ENCODE measurements at regions of chr5 and their contacts with region 1.

Region 1: GRCh38 chr5:97162045-97162444 is 19.6 kb upstream of the LIX1 start:
- DNase-seq: peak; percentile 53 to 60
- H3K4me3 ChIP-seq: no peak overlapping the region
- H3K27ac ChIP-seq: no peak overlapping the region
- H3K4me1 ChIP-seq: no peaks in the 10 kb centered on the region
- H3K27me3 ChIP-seq: no peaks in the 10 kb centered on the region
- CTCF ChIP-seq: peak; percentile 89

Region 2: DNA sequence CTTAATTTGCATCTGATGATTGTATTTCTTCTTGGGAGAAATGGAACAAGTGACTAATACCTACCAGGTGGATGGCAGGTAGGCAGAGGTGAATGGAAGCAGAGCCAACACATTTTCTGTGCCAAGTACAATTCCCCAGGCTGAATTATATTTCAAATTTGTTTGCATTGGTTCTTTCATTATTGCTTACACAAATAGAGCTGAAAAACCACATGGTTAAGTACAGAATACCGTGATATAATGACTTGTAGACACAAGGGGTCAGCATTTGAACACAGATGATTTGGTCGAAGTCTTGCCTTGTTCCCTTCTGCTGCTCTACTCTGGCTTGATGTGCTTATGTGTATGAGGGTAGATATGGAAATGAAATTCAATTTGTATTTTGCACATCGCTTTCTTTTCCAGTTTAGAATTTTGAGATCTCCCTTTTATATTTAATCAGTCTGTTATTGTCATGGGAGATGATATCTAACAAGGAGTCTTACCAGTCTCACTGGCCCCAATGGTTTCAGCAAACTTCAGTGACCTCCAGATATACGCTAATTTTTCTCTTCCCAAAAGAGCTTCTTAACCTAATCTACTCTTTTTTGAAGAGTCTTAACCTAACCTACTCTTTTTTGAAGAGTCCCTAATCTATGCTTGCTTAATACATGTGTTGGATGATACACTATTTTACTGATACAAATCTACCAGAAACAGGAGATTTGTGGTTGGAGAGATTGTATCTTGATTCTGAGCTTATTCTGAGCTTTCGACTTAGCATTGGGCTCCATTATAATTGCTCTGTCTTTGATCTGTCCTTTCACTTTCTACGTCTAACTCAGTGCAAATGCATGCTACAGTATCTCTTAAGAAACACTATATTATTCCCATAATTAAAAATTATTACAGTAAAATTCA is 817.1 kb before region 1 on chr5:
- CTCF ChIA-PET with region 1: no interaction called
- POLR2A ChIA-PET with region 1: no interaction called
- intact Hi-C with region 1: loop called (anchors 5 kb)
- DNase-seq: peak in 1 of 2 experiments; percentile 59
- H3K4me3 ChIP-seq: no peak overlapping the region
- H3K27ac ChIP-seq: no peak overlapping the region
- H3K4me1 ChIP-seq: no peaks in the 10 kb centered on the region
- H3K27me3 ChIP-seq: no peaks in the 10 kb centered on the region
- CTCF ChIP-seq: peak; percentile 70

Region 3: GRCh38 chr5:96687812-96688453 is 474.1 kb before region 1 on chr5:
- CTCF ChIA-PET with region 1: interaction called, 15 read pairs
- POLR2A ChIA-PET with region 1: no interaction called
- intact Hi-C with region 1: loop called (anchors 5 kb)
- DNase-seq: peak in 1 of 2 experiments; percentile 39
- H3K4me3 ChIP-seq: no peak overlapping the region; the same call in 1 of the 2 replicates
- H3K27ac ChIP-seq: peak overlapping the region; percentile 10
- H3K4me1 ChIP-seq: peaks cover 9% of the 10 kb centered on the region; the same call in 1 of the 2 replicates
- H3K27me3 ChIP-seq: no peaks in the 10 kb centered on the region
- CTCF ChIP-seq: peak; percentile 82

Region 4: DNA sequence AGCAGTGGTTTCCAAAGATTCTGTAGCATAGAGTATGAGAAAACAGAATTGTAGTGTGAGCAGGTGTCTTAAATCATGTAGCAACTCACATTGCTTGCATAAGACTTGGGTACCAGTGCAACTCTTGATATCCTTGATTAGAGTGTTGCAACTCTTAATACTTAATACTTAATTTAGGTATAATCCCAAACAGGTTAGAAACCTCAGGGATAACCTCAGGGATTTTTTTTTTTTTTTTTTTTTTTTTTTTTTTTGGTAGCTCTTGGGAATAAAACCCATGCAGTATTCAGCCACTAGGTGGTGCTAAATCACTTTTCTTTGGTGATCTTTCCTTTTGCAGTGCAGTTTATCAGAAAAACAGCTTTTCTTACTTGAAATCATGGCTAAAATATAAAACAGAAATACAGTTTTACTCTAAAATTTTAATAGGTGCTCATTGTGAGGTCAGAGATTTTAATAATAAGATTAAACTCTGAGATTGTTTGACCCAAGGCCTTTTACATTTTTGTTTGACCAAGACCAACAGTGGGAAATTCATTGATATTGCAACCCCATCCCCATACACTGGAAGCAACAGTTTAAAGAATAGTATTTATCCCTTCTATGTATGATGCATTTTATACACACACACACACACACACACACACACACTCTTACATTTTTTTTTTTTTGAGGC is 409.6 kb before region 1 on chr5:
- CTCF ChIA-PET with region 1: interaction called, 3 read pairs
- POLR2A ChIA-PET with region 1: no interaction called
- intact Hi-C with region 1: loop called (anchors 1 kb)
- DNase-seq: peak in 1 of 2 experiments; percentile 11
- H3K4me3 ChIP-seq: no peak overlapping the region
- H3K27ac ChIP-seq: no peak overlapping the region; the same call in 1 of the 2 replicates
- H3K4me1 ChIP-seq: no peaks in the 10 kb centered on the region
- H3K27me3 ChIP-seq: no peaks in the 10 kb centered on the region
- CTCF ChIP-seq: peak; percentile 78

Region 5: DNA sequence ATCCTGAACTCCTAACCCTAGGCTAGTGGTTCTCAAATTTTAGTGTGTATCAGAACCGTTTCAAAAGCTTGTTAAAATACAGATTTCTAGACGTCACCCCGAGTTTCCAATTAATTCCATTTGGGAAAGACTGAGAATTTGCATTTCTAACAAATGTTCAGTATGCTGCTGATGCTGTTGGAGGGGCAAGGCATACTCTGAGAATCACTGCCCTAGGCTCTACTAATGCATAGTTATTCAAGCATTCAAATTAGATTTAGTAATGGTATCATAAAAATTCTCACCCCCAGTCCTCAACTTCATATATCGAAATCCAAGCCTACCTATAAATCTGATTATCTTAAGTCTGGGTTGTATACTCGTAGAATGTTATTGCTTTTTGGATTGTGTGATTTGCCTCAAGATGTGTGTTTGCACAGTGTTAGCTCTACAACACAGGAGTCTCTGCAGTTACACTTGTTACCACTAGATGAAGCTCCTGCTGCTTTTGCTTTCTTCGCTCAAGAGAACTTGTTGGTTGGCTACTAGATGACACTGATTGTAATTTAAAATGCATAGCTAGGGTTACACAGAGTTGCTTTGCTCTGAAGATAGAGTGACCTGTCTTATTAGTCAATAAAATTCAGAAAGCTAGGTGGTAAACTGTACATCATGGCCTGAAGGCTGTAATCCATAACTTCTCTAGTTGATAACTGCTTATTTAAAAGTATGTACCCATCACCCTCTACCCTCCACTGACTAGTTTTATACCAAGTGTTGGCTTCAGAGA is 293.3 kb before region 1 on chr5:
- CTCF ChIA-PET with region 1: interaction called, 8 read pairs
- POLR2A ChIA-PET with region 1: no interaction called
- intact Hi-C with region 1: loop called (anchors 1 kb)
- DNase-seq: peak in 1 of 2 experiments; percentile 63
- H3K4me3 ChIP-seq: no peak overlapping the region
- H3K27ac ChIP-seq: no peak overlapping the region
- H3K4me1 ChIP-seq: no peaks in the 10 kb centered on the region
- H3K27me3 ChIP-seq: no peaks in the 10 kb centered on the region
- CTCF ChIP-seq: peak; percentile 83

Region 6: GRCh38 chr5:96997265-96997859 is 164.7 kb before region 1 on chr5:
- CTCF ChIA-PET with region 1: interaction called, 3 read pairs
- POLR2A ChIA-PET with region 1: no interaction called
- intact Hi-C with region 1: loop called (anchors 1 kb)
- DNase-seq: peak in 1 of 2 experiments; percentile 43
- H3K4me3 ChIP-seq: no peak overlapping the region
- H3K27ac ChIP-seq: no peak overlapping the region
- H3K4me1 ChIP-seq: no peaks in the 10 kb centered on the region
- H3K27me3 ChIP-seq: no peaks in the 10 kb centered on the region
- CTCF ChIP-seq: peak; percentile 77

Region 7: GRCh38 chr5:97098922-97099321 is 63.1 kb before region 1 on chr5:
- CTCF ChIA-PET with region 1: no interaction called
- POLR2A ChIA-PET with region 1: no interaction called
- intact Hi-C with region 1: no loop called
- DNase-seq: no peak
- H3K4me3 ChIP-seq: no peak overlapping the region
- H3K27ac ChIP-seq: no peak overlapping the region
- H3K4me1 ChIP-seq: no peaks in the 10 kb centered on the region
- H3K27me3 ChIP-seq: no peaks in the 10 kb centered on the region
- CTCF ChIP-seq: no peak

Region 8: DNA sequence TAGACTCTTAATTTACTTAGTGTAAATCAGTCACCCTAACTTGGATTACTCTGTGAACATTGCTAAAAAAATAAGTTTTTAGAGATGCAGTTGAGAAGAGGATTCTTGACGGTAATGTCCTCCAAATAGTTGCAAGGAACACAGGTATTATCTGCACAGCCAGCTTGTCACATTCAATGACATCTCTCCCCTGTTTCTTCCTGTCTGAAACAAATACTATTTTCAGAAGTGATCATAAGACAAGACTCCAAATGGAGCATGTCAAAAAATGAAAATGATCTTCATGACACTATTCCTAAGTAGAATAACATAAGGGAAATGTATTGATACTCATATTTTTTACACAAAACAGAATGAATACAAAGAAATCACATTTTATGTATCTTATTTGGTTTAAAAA is 1994.6 kb after region 1 on chr5:
- CTCF ChIA-PET with region 1: interaction called, 12 read pairs
- POLR2A ChIA-PET with region 1: no interaction called
- intact Hi-C with region 1: no loop called
- DNase-seq: no peak
- H3K4me3 ChIP-seq: no peak overlapping the region
- H3K27ac ChIP-seq: no peak overlapping the region
- H3K4me1 ChIP-seq: no peaks in the 10 kb centered on the region
- H3K27me3 ChIP-seq: no peaks in the 10 kb centered on the region
- CTCF ChIP-seq: no peak

Measured in PC-9 (cell line).